ENCODE measurements at regions of chr9 and their contacts with region 1.

Region 1: DNA sequence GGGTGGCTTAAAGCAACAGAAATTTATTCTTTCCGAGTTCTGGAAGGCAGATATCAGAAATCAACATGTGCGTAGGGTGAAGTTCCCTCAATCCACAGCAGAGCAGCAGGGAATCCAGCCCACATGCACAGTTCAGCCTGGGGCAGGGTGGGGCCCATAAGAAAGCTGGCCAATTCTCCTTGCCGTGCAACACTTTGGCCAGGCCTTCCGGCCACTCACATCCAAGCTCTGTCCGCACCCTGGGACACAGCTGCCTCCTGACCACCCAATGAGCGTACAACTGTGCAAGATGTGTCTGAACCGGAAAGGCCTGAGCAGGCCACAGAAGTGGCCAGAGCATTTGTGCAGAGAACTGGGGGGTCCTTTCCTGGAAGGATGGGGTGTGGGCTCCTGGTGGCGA is 274.9 kb downstream of the GADD45G start:
- DNase-seq: peak; percentile 71
- ATAC-seq: peak; percentile 46 to 63

Region 2: GRCh38 chr9:89619019-89619418 is 260.7 kb before region 1 on chr9:
- intact Hi-C with region 1: loop called in 1 of 2 experiments (anchors 10 kb)
- DNase-seq: no peak
- ATAC-seq: no peak

Region 3: GRCh38 chr9:89661956-89662717 is 217.6 kb before region 1 on chr9:
- intact Hi-C with region 1: loop called in 1 of 2 experiments (anchors 5 kb)
- DNase-seq: peak; percentile 98
- ATAC-seq: peak; percentile 97 to 98

Region 4: DNA sequence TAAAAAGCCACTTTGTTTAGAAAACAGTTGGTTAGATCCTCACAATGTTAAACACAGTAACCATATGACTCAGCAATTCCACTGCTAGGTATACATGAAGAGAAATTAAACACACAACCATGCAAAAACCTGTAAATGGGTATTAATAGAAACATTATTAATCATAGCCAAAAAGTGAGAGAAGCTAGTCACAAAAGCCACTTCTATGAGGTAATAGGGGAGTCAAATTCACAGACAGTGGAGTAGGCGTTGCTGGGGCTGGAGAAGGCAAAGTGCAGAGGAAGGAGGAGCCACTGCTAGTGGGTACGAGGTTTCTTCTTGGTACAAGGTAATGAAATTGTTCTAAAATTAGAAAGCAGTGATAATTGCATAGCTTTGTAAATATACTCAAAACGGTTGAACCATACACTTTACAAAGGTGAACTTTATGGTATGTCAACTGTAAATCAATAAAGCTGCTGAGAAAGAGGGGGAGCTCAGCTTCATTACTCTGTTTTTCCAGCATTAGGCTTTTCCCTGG is 89.5 kb after region 1 on chr9:
- intact Hi-C with region 1: no loop called
- DNase-seq: no peak
- ATAC-seq: peak in 1 of 2 donors; percentile 21

Region 5: DNA sequence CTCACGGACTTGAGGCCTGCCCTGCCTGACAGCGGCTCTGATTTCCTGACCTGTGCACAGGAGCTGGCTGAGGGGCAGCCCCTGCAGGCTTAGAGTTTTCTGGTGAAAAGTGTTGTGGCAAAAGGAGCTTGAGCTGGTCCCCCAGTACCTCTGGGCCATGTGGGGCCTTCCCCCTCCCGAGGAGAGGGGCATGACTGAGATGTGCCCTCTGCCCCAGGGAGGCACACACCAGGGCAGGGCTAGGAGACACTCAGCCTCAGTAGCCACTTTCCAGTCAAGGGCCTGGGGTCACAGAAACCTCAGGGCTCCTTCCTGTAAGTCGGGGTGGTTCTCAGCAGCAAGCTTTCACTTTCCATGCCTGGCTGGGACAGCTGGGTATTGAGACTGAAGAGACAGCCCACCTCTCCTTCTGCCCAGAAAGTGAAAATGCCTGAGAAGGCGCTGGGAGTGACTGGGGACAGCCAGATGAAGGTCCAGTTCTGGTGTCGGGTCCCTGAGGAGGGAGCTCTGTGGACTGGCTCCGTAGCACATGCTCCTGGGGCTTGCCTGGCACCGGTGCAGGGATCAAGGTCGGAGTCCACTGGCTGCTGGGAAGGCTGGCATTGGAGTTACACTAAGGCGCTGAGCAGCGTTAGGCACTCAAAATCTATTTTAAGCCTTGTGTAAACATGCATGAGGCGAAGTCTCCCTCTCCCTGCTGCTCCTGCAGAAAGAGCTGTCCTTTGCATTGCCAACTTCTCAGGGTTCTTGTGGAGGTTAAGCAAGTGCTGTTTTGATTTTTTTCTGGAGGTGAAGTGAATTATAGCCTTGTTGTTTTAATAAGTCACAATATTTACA is 120.1 kb after region 1 on chr9:
- intact Hi-C with region 1: loop called in 1 of 2 experiments (anchors 5 kb)
- DNase-seq: peak; percentile 71
- ATAC-seq: peak; percentile 86 to 88

Measured in left cardiac atrium (tissue), 4 donors.